Natural killer cell (primary cell): ENCODE measurements at regions of chr14 and their contacts with region 1.

Region 1: GRCh38 chr14:22556990-22557623 is 31.9 kb downstream of the DAD1 start:
- DNase-seq: peak; percentile 92 to 94
- ATAC-seq: peak; percentile 32 to 63 (median 34)
- H3K4me3 ChIP-seq: peak overlapping the region; percentile 32
- H3K4me3 Mint-ChIP-seq: peak overlapping the region; percentile 94
- H3K27ac ChIP-seq: peak overlapping the region; percentile 97
- H3K27ac Mint-ChIP-seq: peak overlapping the region; percentile 98 to 100
- H3K4me1 ChIP-seq: peaks cover 98% of the 10 kb centered on the region
- H3K4me1 Mint-ChIP-seq: peaks cover 82 to 91% of the 10 kb centered on the region in 2 donors
- H3K27me3 ChIP-seq: no peaks in the 10 kb centered on the region
- H3K27me3 Mint-ChIP-seq: peaks cover 0 to 4% of the 10 kb centered on the region in 2 donors
- CTCF ChIP-seq: peak; percentile 100

Region 2: GRCh38 chr14:22386924-22387775 is 170.0 kb before region 1 on chr14:
- intact Hi-C with region 1: loop called (anchors 1 kb)
- DNase-seq: peak; percentile 58 to 64
- ATAC-seq: peak; percentile 59 to 69 (median 63)
- H3K4me3 ChIP-seq: no peak overlapping the region
- H3K4me3 Mint-ChIP-seq: no peak overlapping the region
- H3K27ac ChIP-seq: no peak overlapping the region
- H3K27ac Mint-ChIP-seq: peak overlapping the region; percentile 73 to 77
- H3K4me1 ChIP-seq: peaks cover 33% of the 10 kb centered on the region
- H3K4me1 Mint-ChIP-seq: peaks cover 36% of the 10 kb centered on the region in 2 donors
- H3K27me3 ChIP-seq: no peaks in the 10 kb centered on the region
- H3K27me3 Mint-ChIP-seq: no peaks in the 10 kb centered on the region
- CTCF ChIP-seq: peak; percentile 89

Region 3: GRCh38 chr14:22472935-22473854 is 83.9 kb before region 1 on chr14:
- intact Hi-C with region 1: loop called (anchors 1 kb)
- DNase-seq: peak; percentile 56 to 57
- ATAC-seq: peak; percentile 72 to 87 (median 78)
- H3K4me3 ChIP-seq: no peak overlapping the region
- H3K4me3 Mint-ChIP-seq: peak overlapping the region; percentile 91
- H3K27ac ChIP-seq: peak overlapping the region; percentile 74
- H3K27ac Mint-ChIP-seq: peak overlapping the region; percentile 80 to 89
- H3K4me1 ChIP-seq: peaks cover 91% of the 10 kb centered on the region
- H3K4me1 Mint-ChIP-seq: peaks cover 91 to 95% of the 10 kb centered on the region in 2 donors
- H3K27me3 ChIP-seq: no peaks in the 10 kb centered on the region
- H3K27me3 Mint-ChIP-seq: no peaks in the 10 kb centered on the region
- CTCF ChIP-seq: peak; percentile 73

Region 4: DNA sequence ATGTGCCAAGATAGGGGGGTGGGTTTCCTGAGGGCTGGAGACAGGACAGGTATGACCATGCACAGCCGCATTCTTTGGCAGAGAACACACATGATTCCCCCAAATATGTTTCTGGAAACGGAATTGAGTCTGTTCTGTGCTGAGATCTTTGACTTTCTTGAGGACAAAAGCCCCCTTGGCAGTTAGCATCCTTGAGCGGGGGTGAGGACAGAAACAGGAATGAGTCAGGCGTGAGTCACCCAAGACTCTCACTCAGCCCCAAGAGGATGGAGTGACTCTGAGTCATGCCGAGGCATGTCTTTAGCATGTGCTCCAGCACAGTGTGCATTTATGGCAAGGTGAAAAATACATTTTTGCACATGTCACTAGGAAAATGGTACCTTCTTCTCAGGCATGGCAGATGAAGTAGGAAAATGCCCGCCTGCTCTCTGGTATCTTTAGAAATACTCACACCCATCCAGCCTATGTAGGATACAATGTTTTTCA is 20.2 kb before region 1 on chr14:
- intact Hi-C with region 1: loop called (anchors 2 kb)
- DNase-seq: peak; percentile 40 to 89
- ATAC-seq: peak; percentile 91 to 99 (median 92)
- H3K4me3 ChIP-seq: no peak overlapping the region
- H3K4me3 Mint-ChIP-seq: no peak overlapping the region
- H3K27ac ChIP-seq: peak overlapping the region; percentile 26
- H3K27ac Mint-ChIP-seq: peak overlapping the region; percentile 58
- H3K4me1 ChIP-seq: peaks cover 37% of the 10 kb centered on the region
- H3K4me1 Mint-ChIP-seq: peaks cover 45 to 58% of the 10 kb centered on the region in 2 donors
- H3K27me3 ChIP-seq: no peaks in the 10 kb centered on the region
- H3K27me3 Mint-ChIP-seq: no peaks in the 10 kb centered on the region
- CTCF ChIP-seq: no peak

Region 5: DNA sequence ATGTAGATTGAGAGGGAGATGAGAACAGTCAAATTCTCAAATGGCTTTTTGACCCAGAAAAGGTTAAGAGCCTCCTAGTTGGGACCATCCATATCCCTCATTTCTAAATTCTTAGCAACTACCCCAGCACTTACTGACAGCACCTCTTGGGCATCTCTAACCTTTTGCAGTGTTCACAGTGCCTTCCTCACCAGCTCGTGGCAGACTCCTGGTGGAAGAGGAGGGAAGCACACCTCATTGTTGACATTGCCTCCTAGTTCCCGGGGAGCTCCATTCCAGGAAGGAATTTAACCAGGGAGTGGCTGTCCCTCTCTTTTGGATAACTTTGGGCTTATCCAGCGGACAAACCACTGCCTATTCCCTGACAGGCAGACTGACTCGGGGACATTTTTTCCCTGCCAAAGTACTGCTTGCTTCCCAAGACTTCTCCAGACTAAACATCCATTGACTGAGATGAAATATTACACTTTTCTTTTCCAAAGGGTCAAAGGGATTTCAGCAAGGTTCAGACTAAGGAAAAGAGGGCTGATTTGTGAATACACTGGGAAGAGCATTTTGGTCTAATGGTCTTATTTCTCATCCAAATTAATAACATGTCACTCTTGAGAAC is 96.0 kb after region 1 on chr14:
- intact Hi-C with region 1: loop called (anchors 1 kb)
- DNase-seq: peak; percentile 20 to 75
- ATAC-seq: peak; percentile 60 to 77 (median 76)
- H3K4me3 ChIP-seq: no peak overlapping the region
- H3K4me3 Mint-ChIP-seq: no peak overlapping the region
- H3K27ac ChIP-seq: no peak overlapping the region
- H3K27ac Mint-ChIP-seq: no peak overlapping the region
- H3K4me1 ChIP-seq: no peaks in the 10 kb centered on the region
- H3K4me1 Mint-ChIP-seq: no peaks in the 10 kb centered on the region
- H3K27me3 ChIP-seq: no peaks in the 10 kb centered on the region
- H3K27me3 Mint-ChIP-seq: peaks cover 2 to 10% of the 10 kb centered on the region in 2 donors
- CTCF ChIP-seq: peak; percentile 63

Region 6: DNA sequence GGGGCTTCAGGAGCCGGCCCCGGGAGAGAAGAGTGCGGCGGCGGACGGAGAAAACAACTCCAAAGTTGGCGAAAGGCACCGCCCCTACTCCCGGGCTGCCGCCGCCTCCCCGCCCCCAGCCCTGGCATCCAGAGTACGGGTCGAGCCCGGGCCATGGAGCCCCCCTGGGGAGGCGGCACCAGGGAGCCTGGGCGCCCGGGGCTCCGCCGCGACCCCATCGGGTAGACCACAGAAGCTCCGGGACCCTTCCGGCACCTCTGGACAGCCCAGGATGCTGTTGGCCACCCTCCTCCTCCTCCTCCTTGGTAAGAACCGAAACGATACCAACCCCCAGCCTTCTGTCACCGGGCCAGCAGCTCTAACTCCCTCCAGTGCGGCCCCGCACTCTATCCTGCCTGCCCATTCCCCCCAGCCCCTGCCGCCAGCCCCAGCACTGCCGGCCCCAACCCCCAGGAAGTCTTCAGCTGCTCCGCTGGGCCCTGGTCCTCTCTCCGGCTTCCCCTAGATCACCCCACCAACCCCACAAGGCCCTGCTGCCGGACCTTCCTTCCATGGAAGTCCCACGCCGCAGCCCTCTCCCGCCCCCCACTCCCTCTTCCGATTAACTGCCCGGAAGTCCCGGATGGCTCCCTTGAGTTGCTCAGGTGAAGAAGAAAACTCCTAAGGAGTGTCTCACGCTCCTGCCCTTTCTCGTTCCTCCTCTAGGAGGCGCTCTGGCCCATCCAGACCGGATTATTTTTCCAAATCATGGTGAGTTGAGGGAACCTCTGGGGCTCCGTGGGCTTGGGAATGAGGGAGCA is 315.1 kb after region 1 on chr14:
- intact Hi-C with region 1: loop called (anchors 5 kb)
- DNase-seq: peak; percentile 67 to 86
- ATAC-seq: peak; percentile 44 to 56 (median 52)
- H3K4me3 ChIP-seq: peak overlapping the region; percentile 85
- H3K4me3 Mint-ChIP-seq: peak overlapping the region; percentile 93
- H3K27ac ChIP-seq: peak overlapping the region; percentile 93
- H3K27ac Mint-ChIP-seq: peak overlapping the region; percentile 95 to 96
- H3K4me1 ChIP-seq: peaks cover 17% of the 10 kb centered on the region
- H3K4me1 Mint-ChIP-seq: peaks cover 32 to 39% of the 10 kb centered on the region in 2 donors
- H3K27me3 ChIP-seq: no peaks in the 10 kb centered on the region
- H3K27me3 Mint-ChIP-seq: no peaks in the 10 kb centered on the region
- CTCF ChIP-seq: peak; percentile 81

Region 7: GRCh38 chr14:23057757-23058653 is 500.9 kb after region 1 on chr14:
- intact Hi-C with region 1: loop called (anchors 1 kb)
- DNase-seq: peak; percentile 86 to 94
- ATAC-seq: peak; percentile 72 to 83 (median 73)
- H3K4me3 ChIP-seq: peak overlapping the region; percentile 58
- H3K4me3 Mint-ChIP-seq: peak overlapping the region; percentile 82
- H3K27ac ChIP-seq: no peak overlapping the region
- H3K27ac Mint-ChIP-seq: peak overlapping the region; percentile 60 to 74
- H3K4me1 ChIP-seq: peaks cover 18% of the 10 kb centered on the region
- H3K4me1 Mint-ChIP-seq: peaks cover 17 to 27% of the 10 kb centered on the region in 2 donors
- H3K27me3 ChIP-seq: no peaks in the 10 kb centered on the region
- H3K27me3 Mint-ChIP-seq: peaks cover 0 to 3% of the 10 kb centered on the region in 2 donors
- CTCF ChIP-seq: peak; percentile 98